ENCODE measurements at regions of chr11 and their contacts with region 1.

Region 1: DNA sequence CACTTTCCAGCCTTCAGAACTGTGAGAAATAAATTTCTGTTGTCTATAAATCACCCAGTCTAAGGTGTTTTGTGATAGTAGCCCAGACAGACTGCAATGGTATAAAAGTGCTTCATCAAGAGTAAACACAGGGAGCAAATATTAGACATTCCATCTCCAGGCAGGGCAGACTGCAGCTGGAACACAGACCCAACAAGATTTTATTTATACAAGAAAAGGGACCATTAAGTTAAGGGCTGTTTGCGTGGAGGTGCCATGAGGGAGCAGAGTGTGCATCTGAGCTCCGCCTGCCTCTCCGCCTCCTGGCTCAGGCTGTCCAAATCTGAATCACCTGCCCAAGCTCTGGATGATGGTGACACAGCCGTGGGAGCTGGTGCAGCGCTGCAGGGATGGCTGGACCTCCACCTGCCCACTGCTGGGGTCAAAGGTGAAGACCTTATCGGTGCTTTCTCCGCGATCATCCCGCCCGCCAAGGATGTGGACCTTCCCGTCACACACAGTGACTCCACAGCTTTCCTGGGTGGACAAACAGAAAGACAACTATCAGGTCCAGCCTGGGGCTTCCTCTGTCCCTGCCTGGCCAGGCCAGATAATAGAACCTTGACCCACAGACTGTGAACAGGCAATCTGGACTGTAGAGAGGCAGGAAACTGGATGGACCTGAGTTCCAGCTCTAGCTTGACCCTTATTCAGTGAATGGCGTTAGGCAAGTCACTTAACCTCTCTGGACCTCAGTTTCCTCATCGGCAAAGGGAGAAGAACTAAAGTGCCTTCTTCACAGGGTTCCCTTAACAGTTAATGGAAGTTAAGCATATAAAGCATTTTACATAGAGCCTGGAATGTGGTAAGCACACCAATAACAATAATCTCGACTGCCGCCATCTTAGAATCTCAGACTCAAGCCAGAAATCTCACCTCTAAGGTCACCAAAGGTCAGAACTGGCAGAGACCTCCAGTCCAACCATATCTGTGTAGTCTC is 10.5 kb downstream of the KLHL35 start:
- DNase-seq: no peak
- H3K4me3 Mint-ChIP-seq: no peak overlapping the region
- H3K27ac Mint-ChIP-seq: no peak overlapping the region
- H3K4me1 Mint-ChIP-seq: peaks cover 3% of the 10 kb centered on the region
- H3K27me3 Mint-ChIP-seq: no peaks in the 10 kb centered on the region

Region 2: DNA sequence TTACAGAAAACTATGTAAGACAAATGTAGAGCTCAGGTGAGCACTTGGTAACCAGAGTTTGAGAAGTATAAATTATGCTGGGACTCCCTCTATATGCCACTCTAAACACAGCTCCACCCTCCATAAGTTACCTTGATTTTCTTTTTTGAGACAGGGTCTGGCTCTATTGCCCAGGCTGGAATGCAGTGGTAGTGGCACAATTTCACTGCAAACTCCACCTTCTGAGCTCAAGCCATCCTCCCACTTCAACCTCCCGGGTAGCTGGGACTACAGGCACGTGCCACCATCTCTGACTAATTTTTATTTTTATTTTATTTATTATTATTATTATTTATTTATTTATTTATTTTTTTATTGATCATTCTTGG is 13.7 kb before region 1 on chr11:
- CTCF ChIA-PET with region 1: interaction called, 14 read pairs
- POLR2A ChIA-PET with region 1: interaction called, 5 read pairs
- intact Hi-C with region 1: no loop called
- DNase-seq: no peak
- H3K4me3 Mint-ChIP-seq: no peak overlapping the region
- H3K27ac Mint-ChIP-seq: no peak overlapping the region
- H3K4me1 Mint-ChIP-seq: peaks cover 25% of the 10 kb centered on the region
- H3K27me3 Mint-ChIP-seq: no peaks in the 10 kb centered on the region